ENCODE measurements at regions of chr5 and their contacts with region 1.

Region 1: DNA sequence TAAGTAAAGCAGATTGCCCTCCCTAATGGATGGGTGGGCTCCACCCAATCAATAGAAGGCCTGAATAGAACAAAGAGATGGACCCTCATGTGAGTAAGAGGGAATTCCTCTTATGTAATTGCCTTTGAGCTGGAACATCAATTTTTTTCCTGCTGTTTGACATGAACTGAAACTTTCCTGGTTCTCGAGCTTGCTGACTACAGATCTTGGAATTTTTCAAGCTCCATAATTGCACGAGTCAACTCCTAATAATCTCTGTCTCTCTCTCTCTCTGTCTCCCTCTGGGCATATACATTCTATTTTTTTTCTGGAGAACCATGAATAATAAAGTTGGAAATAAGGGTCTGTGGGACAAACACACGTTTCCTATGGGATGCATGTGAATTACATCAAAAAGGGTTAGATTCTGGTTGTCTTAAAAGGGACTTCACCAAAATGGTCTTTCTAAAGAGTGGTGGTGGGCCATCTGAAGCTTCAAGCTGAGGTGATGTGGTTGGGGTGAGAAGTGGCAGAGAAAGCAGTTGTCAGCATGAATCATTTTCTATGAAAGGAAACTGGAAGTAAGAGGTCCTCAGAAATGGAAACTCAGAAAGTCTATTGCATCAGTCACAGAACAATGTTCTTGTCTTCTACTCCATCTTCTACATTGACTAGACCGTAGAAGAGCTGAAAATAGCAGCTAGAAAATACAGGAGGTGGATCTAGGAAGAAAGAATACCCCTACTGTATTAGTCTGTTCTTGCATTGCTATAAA is 47.0 kb upstream of the HOMER1 start:
- DNase-seq: peak; percentile 69
- ATAC-seq: peak; percentile 86
- H3K4me3 Mint-ChIP-seq: peak overlapping the region; percentile 7
- H3K27ac Mint-ChIP-seq: peak overlapping the region; percentile 99
- H3K4me1 Mint-ChIP-seq: peaks cover 42% of the 10 kb centered on the region
- H3K27me3 Mint-ChIP-seq: no peaks in the 10 kb centered on the region
- CTCF ChIP-seq: no peak

Region 2: GRCh38 chr5:79612667-79613198 is 51.8 kb after region 1 on chr5:
- CTCF ChIA-PET with region 1: interaction called, 6 read pairs
- POLR2A ChIA-PET with region 1: interaction called, 14 read pairs
- intact Hi-C with region 1: loop called (anchors 5 kb)
- DNase-seq: no peak
- ATAC-seq: no peak
- H3K4me3 Mint-ChIP-seq: peak overlapping the region; percentile 93
- H3K27ac Mint-ChIP-seq: peak overlapping the region; percentile 96
- H3K4me1 Mint-ChIP-seq: peaks cover 32% of the 10 kb centered on the region
- H3K27me3 Mint-ChIP-seq: no peaks in the 10 kb centered on the region
- CTCF ChIP-seq: no peak